Calu3 (cell line): ENCODE measurements at regions of chr6 and their contacts with region 1.

Region 1: DNA sequence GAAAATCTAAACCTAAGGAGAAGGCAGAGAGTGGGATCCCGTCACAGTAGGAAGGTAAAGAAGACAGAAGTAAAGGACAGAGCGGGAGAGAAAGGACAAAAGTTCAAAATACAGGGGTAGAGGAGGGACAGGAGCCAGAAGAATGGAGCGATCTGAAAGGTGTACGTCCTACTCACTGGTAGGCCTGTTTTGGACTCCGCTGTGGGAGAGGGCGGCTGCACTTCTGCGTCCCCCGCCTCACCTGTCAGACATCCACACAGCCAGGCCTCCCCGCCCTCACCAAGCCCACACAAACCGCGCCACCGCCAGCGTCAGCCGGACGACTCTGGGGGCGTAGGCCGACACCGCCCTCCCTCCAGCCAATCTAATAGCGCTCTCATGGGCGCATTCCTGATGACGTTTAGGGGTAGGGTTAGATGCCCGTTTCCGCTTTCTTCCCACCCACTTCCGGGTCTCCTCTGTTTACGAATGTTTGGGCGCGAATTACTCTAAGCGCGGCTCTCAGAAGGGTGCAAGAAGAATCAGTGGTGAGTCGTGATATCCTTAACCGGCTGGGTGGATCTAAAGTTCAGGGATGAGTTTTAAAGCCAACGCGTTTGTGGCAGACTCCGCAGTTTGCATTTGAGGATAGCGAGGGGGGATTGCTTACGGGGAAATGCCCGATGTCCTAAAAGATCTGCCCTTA is at the starts of genes CENPQ and MMUT:
- DNase-seq: peak; percentile 94
- H3K4me3 Mint-ChIP-seq: peak within 1 kb of the TSS; percentile 89
- H3K27ac Mint-ChIP-seq: peak within 1 kb of the TSS; percentile 92
- H3K4me1 Mint-ChIP-seq: peaks cover 27% of the 10 kb centered on the region
- H3K27me3 Mint-ChIP-seq: no peaks in the 10 kb centered on the region
- CTCF ChIP-seq: no peak
- total RNA-seq, gene CENPQ: 16.4 and 18.8 TPM in 2 replicates
- total RNA-seq, gene MMUT: 17.8 and 19.6 TPM in 2 replicates

Region 2: GRCh38 chr6:49336514-49337131 is 126.4 kb before region 1 on chr6:
- CTCF ChIA-PET with region 1: no interaction called
- intact Hi-C with region 1: no loop called
- DNase-seq: no peak
- H3K4me3 Mint-ChIP-seq: no peak overlapping the region
- H3K27ac Mint-ChIP-seq: no peak overlapping the region
- H3K4me1 Mint-ChIP-seq: no peaks in the 10 kb centered on the region
- H3K27me3 Mint-ChIP-seq: no peaks in the 10 kb centered on the region
- CTCF ChIP-seq: no peak

Region 3: GRCh38 chr6:49606696-49607390 is 143.8 kb after region 1 on chr6:
- CTCF ChIA-PET with region 1: no interaction called
- intact Hi-C with region 1: loop called (anchors 5 kb)
- DNase-seq: peak; percentile 42
- H3K4me3 Mint-ChIP-seq: no peak overlapping the region
- H3K27ac Mint-ChIP-seq: no peak overlapping the region
- H3K4me1 Mint-ChIP-seq: peaks cover 11% of the 10 kb centered on the region
- H3K27me3 Mint-ChIP-seq: no peaks in the 10 kb centered on the region
- CTCF ChIP-seq: peak; percentile 77